GM23248 (cell line): ENCODE measurements at regions of chr9 and their contacts with region 1.

Region 1: DNA sequence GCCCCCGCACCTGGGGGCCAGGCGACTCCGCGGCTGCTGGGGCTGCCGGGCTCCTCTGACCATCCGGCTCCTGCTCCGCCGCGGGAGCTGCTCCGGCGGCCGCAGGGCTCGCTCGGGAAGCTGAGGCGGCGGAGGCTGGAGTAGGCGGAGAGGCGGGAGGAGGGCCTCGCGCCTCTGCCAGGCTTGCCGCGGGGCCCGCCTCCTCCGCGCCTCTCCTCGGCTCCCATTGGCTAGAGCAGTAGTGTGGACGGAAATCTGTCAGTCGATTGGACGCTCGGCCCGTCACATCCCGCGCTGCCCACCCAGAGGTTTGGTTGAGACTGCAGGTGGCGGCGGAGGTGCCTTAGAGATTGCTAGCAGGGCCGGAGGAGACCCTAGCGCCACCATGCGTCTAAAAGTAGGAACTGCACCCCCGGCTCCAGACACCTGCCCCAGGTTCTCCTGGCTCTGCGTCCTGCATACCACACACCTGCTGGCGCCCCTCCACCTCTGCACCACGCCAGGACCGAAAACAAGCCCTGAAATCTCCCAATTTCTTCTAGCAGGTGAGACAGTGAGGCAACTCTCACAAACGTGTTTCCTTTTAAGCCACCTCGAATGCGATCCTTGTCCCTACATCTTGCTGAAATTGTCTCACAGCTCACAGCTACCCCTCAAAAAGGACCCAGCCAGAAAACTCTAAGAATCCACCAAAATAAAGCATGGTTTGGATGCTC is at the start of gene SCAI:
- DNase-seq: peak; percentile 100
- H3K4me3 ChIP-seq: peak within 1 kb of the TSS; percentile 67
- H3K27ac ChIP-seq: no peak within 1 kb of the TSS
- H3K4me1 ChIP-seq: peaks cover 17% of the 10 kb centered on the region; the same call in 1 of the 2 replicates
- H3K27me3 ChIP-seq: no peaks in the 10 kb centered on the region
- total RNA-seq, gene SCAI: 2.9 and 3.0 TPM in 2 replicates

Region 2: DNA sequence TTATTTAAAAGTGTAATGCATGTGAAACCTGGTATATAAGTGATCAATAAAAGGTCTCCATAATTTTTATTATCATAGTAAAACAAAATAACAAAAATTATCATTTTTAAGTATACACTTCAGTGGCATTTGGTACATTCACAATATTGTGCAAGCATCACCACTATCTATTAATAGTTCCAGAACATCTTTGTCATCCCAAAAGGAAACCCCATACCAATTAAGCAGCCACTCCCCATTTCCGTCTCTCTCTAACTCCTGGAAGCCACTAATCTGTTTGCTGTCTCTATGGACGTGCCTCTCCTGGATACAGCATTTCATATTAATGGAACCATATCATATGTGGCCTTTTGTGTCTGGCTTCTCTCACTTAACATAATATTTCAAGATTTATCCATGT is 359.0 kb before region 1 on chr9:
- in situ Hi-C with region 1: no loop called
- DNase-seq: peak; percentile 86
- H3K4me3 ChIP-seq: no peak overlapping the region
- H3K27ac ChIP-seq: peak overlapping the region; percentile 7; the same call in 1 of the 2 replicates
- H3K4me1 ChIP-seq: peaks cover 9% of the 10 kb centered on the region
- H3K27me3 ChIP-seq: no peaks in the 10 kb centered on the region; the same call in 1 of the 2 replicates

Region 3: DNA sequence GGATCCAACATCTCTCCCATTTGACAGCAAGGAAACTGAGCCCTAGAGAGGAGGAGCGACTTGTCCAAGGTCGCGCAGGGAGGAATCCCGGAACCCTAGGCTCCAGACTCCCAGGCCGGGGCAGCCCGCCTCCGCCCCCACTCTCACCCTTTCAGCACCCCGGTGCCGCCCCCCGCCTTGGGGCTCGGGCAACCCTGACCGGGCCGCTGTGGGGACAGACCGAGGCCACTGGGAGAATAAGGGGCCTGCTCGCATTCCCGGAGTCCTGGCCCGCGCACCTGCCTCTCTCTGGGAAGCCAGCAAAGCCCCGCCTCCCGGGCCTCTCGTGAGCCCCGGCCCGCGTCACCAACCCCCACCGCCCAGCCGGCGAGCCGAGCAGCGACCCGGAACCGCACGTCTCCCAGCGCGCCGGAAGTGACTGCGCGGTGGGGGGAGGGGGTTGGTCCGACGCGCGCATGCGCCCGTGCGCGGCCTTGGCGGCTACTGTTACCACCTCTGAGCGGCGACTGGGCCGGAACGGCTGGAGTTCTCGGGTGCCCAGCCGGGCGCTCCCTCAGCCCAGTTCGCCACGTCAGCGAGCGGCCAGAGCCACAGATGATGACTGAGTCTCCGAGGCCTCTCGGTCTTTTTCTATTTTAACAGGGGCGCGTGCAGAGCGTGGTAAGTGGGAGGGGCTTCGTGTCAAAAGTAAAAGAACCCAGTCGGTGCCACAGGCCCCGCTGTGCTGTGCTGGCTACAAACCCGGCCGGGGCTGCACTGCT is 202.7 kb before region 1 on chr9 and contains the start of gene GOLGA1:
- in situ Hi-C with region 1: loop called (anchors 25 kb)
- DNase-seq: peak; percentile 97
- H3K4me3 ChIP-seq: peak within 1 kb of the TSS; percentile 90
- H3K27ac ChIP-seq: peak within 1 kb of the TSS; percentile 98
- H3K4me1 ChIP-seq: peaks cover 10% of the 10 kb centered on the region; the same call in 1 of the 2 replicates
- H3K27me3 ChIP-seq: no peaks in the 10 kb centered on the region
- total RNA-seq, gene GOLGA1: 12.4 and 18.1 TPM in 2 replicates